ENCODE measurements at regions of chr12 and their contacts with region 1.

Region 1: GRCh38 chr12:132489602-132490239 is at the start of gene FBRSL1:
- DNase-seq: peak; percentile 47 to 94
- H3K4me3 ChIP-seq: peak within 1 kb of the TSS; percentile 79 to 92
- H3K27ac ChIP-seq: peak within 1 kb of the TSS; percentile 42 to 60
- H3K4me1 ChIP-seq: peaks cover 10 to 32% of the 10 kb centered on the region in 2 donors
- H3K27me3 ChIP-seq: no peaks in the 10 kb centered on the region
- CTCF ChIP-seq: no peak
- total RNA-seq, gene FBRSL1: 40.7 TPM

Region 2: GRCh38 chr12:130871286-130872178 is 1618.2 kb before region 1 on chr12 and contains the start of gene RAN:
- intact Hi-C with region 1: loop called (anchors 5 kb)
- DNase-seq: peak; percentile 33 to 93
- H3K4me3 ChIP-seq: peak within 1 kb of the TSS; percentile 90 to 98
- H3K27ac ChIP-seq: peak within 1 kb of the TSS; percentile 74 to 87
- H3K4me1 ChIP-seq: peaks cover 3 to 17% of the 10 kb centered on the region in 2 donors
- H3K27me3 ChIP-seq: no peaks in the 10 kb centered on the region
- CTCF ChIP-seq: peak in 1 of 3 experiments; percentile 8
- total RNA-seq, gene RAN: 73.7 TPM

Region 3: DNA sequence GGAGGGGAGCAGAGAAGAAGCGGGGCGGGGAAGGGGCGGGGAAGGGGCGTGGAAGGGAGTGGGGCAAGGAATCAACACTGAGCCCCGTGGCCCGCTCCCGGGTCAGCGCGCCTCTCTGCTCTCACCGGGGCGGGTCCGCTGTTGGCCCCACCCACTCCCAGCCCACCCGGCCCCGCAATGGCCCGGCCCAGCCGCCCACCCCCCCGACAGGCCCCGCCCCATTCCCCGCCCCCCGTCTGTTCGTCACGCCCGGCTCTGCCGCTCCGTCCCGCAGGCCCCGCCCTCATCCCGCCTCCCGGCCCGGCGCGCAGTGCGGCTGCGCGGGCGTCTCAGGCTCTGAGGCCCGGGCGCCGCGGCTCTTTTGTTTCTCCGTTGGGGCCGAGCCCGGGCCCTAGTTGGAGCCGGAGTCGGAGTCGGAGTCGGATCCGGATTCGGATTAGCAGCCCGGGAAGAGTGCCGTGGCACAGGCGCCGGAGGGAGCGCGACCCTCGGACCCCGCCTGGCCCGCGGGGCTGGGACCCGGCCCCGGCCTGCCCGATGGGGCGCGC is 595.3 kb before region 1 on chr12 and contains the start of gene ULK1:
- intact Hi-C with region 1: loop called (anchors 2 kb)
- DNase-seq: peak; percentile 65 to 96
- H3K4me3 ChIP-seq: peak within 1 kb of the TSS; percentile 62 to 77
- H3K27ac ChIP-seq: peak within 1 kb of the TSS; percentile 93
- H3K4me1 ChIP-seq: peaks cover 5 to 11% of the 10 kb centered on the region in 2 donors
- H3K27me3 ChIP-seq: no peaks in the 10 kb centered on the region
- CTCF ChIP-seq: no peak
- total RNA-seq, gene ULK1: 156 TPM

Region 4: GRCh38 chr12:132144115-132144812 is 345.5 kb before region 1 on chr12 and contains the starts of genes DDX51 and NOC4L:
- intact Hi-C with region 1: loop called (anchors 2 kb)
- DNase-seq: peak; percentile 74 to 96
- H3K4me3 ChIP-seq: peak within 1 kb of the TSS; percentile 97 to 99
- H3K27ac ChIP-seq: peak within 1 kb of the TSS; percentile 91 to 93
- H3K4me1 ChIP-seq: peaks cover 4 to 16% of the 10 kb centered on the region in 2 donors
- H3K27me3 ChIP-seq: no peaks in the 10 kb centered on the region
- CTCF ChIP-seq: no peak
- total RNA-seq, gene DDX51: 4.3 TPM
- total RNA-seq, gene NOC4L: 9.2 TPM

Region 5: GRCh38 chr12:132687208-132688164 is 197.8 kb after region 1 on chr12 and contains the starts of genes POLE and PXMP2:
- intact Hi-C with region 1: loop called (anchors 10 kb)
- DNase-seq: peak; percentile 84 to 98
- H3K4me3 ChIP-seq: peak within 1 kb of the TSS; percentile 91 to 94
- H3K27ac ChIP-seq: peak within 1 kb of the TSS; percentile 67 to 75
- H3K4me1 ChIP-seq: peaks cover 4 to 19% of the 10 kb centered on the region in 2 donors
- H3K27me3 ChIP-seq: no peaks in the 10 kb centered on the region
- CTCF ChIP-seq: peak in 1 of 3 experiments; percentile 44
- total RNA-seq, gene POLE: 115 TPM
- total RNA-seq, gene PXMP2: 18.8 TPM

Measured in ascending aorta (tissue), 2 donors.